Left cardiac atrium (tissue), 4 donors: ENCODE measurements at regions of chr12 and their contacts with region 1.

Region 1: DNA sequence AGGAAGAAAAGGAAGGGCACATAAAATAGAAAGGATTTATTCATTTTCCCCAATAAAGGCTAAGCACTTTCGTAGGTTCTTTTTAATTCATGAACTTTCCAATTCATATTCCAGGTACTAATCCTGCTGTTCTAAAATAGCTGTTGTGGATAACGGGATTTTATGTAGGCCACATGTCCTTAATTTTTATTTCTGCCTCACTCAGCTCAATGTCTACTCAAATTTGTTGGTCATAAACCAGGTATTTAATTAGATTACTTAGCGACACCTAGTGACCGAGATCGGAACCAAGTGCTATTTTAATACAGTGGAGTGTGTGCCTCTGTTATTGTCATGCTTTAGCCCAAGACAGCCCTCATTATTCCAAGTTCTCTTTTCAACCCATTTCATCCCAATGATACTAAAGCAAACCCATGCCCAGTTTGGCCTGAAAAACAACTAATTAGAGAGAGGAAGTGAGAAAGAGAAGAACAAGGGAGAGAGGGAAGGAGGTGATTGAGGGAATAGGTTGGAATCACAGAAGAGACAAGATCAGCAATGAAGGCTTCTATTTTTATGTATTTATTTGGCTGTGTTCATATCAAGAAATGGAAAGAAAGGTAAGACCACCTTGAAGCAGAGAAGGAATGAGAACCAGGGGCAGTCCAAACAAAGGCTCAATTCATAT is 45.9 kb upstream of the IFNG-AS1 start:
- DNase-seq: peak; percentile 53
- ATAC-seq: peak; percentile 80 to 83

Region 2: DNA sequence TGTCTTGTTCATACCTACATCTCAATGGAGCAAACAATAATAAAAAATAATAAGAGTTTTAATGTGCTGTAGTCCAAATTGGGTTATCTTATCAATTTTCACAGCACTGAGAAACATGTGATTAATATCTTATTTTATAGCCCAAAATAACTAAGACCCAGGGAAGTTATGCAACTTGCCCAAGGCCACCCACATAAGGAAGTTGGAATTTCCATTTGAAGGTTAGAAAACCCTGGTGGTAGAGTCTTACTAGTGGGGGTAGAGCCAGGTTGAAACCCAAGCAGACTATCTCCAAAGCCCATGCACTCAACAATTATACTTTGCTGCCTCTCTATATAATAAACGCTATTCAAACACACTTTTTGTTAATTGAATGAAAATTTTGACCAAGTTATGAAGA is 944.2 kb before region 1 on chr12:
- intact Hi-C with region 1: no loop called
- DNase-seq: no peak
- ATAC-seq: no peak

Region 3: DNA sequence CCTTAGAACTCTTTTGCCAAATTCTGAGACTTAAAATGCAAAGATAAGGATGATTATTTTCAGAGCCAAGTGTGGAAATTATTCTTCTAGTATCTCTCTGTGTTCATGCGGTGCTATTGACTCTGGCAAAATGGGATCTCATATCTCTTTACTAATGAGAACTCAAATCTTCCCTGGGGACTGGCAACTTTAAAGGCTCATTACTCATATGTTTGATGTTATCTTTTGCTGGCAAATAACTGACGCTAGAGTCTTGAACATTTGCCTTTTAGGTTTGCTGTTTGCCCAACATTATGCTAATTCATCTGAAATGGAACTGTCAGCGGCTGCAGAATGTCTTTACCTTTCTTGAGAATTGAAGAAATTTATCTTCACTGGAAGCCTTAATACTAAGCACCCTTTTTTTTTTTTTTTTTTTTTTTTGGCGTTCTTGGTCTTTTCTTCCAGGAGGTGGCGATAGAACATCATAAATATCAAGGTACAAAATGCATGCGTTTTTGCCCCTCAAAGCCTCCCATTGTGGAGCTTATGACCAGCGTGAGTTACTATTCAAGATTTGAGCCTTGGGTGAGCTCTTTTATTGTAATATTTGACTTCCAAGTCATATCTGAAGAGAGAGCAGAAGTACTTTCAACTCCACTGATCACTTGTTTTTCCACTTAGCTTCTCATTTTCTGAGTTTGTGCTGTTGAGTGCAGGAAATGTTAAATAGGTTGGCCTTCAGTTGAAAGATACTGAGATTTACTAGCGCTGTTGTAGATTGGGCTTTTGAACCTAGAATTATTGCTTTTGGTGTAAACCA is 587.6 kb before region 1 on chr12:
- intact Hi-C with region 1: loop called in 1 of 2 experiments (anchors 5 kb)
- DNase-seq: no peak
- ATAC-seq: peak; percentile 65 to 81

Region 4: GRCh38 chr12:67433385-67434175 is 509.8 kb before region 1 on chr12:
- intact Hi-C with region 1: loop called in 1 of 2 experiments (anchors 5 kb)
- DNase-seq: no peak
- ATAC-seq: no peak

Region 5: DNA sequence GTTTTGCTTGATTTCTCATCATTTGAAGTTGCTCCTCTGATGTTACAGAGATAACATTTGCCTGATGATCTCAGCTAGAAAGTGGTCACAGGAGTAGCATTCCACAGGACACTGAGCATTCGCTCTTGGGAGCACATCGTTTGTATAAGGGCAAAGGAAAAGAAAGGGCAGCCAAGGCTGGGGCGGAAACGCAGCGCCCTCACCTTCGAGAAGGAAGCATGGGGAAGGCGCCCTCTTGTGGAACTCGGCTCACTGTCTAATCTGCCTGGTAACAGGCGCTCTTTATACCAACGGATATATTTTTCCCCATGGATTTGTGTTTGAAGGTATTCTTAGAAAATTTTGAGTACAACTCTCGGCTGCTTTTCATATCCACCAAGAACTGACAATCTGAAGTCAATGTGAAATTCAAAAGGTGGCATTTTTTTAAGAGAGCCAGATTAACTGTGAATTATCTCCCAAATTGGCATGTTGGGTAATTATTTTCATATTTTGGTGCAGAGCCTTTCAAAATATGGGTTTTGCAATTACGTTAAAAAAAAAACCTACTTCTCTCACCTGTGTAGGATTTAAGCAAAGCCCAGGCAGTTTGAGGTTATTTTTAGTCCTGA is 501.5 kb before region 1 on chr12:
- intact Hi-C with region 1: loop called in 1 of 2 experiments (anchors 10 kb)
- DNase-seq: peak; percentile 89
- ATAC-seq: peak; percentile 96 to 98

Region 6: GRCh38 chr12:67562513-67563287 is 380.7 kb before region 1 on chr12:
- intact Hi-C with region 1: no loop called
- DNase-seq: no peak
- ATAC-seq: no peak

Region 7: DNA sequence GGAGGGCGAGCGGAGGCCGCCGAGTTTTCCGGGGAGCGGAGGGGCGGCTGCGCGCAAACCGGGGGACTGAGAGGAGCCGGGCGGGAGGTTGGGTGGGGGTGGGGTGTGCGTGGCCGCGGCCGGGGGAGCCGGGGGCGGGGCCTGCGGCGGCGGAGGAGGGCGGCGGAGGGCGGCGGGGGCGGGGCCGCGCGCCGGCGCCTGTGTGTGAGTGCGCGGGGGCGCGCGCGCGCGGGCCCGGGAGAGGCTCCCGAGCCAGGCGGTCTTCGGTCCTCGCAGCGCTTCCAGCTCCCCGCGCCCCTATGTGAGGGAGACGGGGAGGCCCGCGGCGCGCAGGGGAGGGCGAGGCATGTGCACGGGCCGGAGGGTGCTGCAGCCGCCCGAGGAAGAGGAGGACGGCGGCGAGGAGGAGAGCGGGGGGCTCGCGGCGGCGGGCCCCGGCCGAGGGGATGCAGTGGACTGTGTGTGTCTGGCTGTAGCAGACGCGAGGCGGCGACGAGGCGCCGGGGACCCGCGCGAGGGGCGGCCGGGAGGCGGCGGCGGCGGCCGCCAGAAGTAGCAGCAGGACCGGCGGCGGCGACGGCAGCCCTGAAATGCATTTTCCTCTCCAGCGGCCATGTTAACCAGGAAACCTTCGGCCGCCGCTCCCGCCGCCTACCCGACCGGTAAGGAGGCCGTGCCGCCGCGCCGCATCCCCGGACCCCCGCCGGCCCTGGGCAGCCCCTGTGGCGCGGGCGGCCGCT is 294.7 kb before region 1 on chr12 and contains the start of gene DYRK2:
- intact Hi-C with region 1: loop called in 1 of 2 experiments (anchors 5 kb)
- DNase-seq: peak; percentile 88
- ATAC-seq: peak; percentile 73 to 79
- total RNA-seq, gene DYRK2: 61.7 to 67.4 TPM

Region 8: DNA sequence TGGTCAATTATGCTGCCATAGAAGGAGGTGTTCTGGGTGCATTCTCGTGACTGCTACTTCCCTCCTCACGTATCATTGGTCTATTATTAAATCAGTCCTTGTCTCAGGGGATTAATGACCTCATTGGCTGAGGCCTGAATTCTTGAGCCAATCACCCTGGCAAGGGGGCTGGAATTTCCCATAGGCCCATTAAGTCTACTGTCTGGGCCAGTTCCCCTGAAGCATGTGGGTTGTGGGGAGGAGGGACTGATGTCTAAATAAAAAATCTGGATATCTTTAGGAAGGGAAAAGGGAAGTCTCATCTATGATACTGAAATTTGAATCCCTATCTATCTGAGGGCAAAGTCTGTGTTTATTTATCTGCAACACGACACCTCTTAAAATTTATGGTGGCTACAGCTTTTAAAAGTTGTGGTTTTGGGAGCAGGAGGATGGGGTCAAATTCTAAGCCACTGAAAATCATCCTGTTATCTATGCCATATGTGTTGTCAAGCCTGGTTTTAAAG is 223.0 kb before region 1 on chr12:
- intact Hi-C with region 1: loop called in 1 of 2 experiments (anchors 10 kb)
- DNase-seq: peak; percentile 40
- ATAC-seq: peak; percentile 85 to 86